Naive thymus-derived CD4-positive, alpha-beta T cell (primary cell): ENCODE measurements at regions of chr21 and their contacts with region 1.

Region 1: GRCh38 chr21:36141513-36141925 is 6.6 kb downstream of the CBR3 start:
- DNase-seq: peak; percentile 50 to 92 (median 84)
- ATAC-seq: peak; percentile 99
- H3K4me3 ChIP-seq: no peak overlapping the region
- H3K4me3 Mint-ChIP-seq: peak overlapping the region in 5 of 10 donors; percentile 1 to 15 (median 3)
- H3K27ac ChIP-seq: peak overlapping the region; percentile 74
- H3K27ac Mint-ChIP-seq: peak overlapping the region; percentile 16 to 92 (median 83)
- H3K4me1 ChIP-seq: peaks cover 18 to 19% of the 10 kb centered on the region in 2 donors
- H3K4me1 Mint-ChIP-seq: peaks cover 11 to 42% (median 39%) of the 10 kb centered on the region in 7 donors
- H3K27me3 ChIP-seq: no peaks in the 10 kb centered on the region
- H3K27me3 Mint-ChIP-seq: no peaks in the 10 kb centered on the region

Region 2: DNA sequence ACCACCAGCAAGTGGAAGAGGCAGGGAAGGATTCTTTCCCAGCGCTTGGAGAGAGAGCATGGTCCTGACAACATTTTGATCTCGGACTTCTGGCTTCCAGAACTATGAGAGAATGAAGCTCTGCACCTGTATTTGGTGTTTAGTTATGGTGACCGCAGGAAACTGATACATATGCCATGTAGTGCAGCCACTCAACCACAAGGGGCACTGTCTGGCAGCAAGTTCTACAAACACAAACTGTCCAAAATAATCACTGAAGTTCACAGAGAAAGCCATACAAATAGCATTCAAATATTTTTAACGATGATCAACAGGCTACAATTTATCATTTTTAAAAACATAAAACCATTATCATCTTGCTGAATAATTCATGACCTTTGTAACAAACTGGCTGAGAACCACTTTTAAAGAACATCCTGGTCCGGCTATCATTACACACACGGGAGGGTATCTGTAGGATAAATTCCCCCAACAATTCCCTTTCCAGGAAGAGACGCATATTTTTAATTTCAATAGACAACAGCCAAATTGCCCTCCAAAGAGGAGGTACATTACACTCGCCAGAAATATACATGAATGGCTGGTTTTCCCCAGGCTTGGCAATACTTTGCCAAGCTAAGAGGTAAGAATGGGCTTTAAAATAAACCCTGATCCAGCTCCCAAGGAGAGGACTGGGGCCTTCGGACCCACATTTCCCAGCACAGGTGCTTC is 15.9 kb before region 1 on chr21:
- CTCF ChIA-PET with region 1: interaction called, 5 read pairs
- POLR2A ChIA-PET with region 1: interaction called, 6 read pairs
- intact Hi-C with region 1: loop called in 1 of 2 experiments (anchors 2 kb)
- DNase-seq: peak in 7 of 9 donors; percentile 26 to 59 (median 49)
- ATAC-seq: peak; percentile 76
- H3K4me3 ChIP-seq: no peak overlapping the region
- H3K4me3 Mint-ChIP-seq: peak overlapping the region in 1 of 10 donors; percentile 78
- H3K27ac ChIP-seq: no peak overlapping the region
- H3K27ac Mint-ChIP-seq: peak overlapping the region in 3 of 9 donors; percentile 41 to 72 (median 43)
- H3K4me1 ChIP-seq: peaks cover 3 to 13% of the 10 kb centered on the region in 2 donors
- H3K4me1 Mint-ChIP-seq: peaks cover 10 to 31% (median 25%) of the 10 kb centered on the region in 7 donors
- H3K27me3 ChIP-seq: no peaks in the 10 kb centered on the region
- H3K27me3 Mint-ChIP-seq: peaks cover 0 to 8% (median 0%) of the 10 kb centered on the region in 5 donors

Region 3: DNA sequence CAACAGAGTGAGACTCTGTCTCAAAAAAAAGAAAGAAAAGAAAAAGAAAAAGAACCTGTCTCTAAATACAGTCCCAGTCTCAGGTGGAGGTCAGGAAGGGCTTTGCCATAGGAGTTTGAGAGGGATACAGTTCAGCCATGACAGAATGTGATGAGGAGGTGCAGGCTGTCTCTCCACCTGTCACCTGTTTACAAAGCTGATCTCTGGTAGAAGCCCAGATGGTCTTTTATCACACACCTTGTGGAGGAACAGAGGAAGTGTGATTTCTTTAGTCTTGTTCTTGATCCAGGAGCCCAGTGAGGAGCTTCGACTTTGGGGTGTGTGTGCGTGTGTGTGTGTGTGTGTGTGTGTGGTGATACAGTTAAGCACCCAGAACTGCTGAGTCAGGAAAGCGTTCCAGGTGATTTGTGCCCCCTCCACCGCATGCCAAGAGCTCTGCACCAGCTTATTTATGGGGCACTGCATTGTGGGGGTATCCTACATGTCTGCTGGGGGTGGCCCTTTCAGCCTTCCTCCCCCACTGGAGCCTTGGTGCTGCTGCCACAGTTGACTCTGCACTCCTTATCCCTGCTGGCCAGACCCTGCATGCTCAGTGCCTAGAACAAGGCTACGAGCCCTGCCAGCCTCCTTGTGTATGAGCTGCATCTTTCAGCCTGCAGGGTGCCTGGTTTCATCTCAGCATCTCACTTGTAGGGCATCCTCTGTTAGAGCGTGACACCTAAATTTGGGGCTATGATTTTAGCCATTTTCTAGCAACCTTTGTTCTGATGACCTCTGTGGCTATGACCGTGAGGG is 34.4 kb after region 1 on chr21:
- CTCF ChIA-PET with region 1: interaction called, 5 read pairs
- POLR2A ChIA-PET with region 1: interaction called, 3 read pairs
- intact Hi-C with region 1: loop called in 1 of 2 experiments (anchors 1 kb)
- DNase-seq: peak in 5 of 9 donors; percentile 3 to 33 (median 14)
- ATAC-seq: peak; percentile 30
- H3K4me3 ChIP-seq: no peak overlapping the region
- H3K4me3 Mint-ChIP-seq: peak overlapping the region in 2 of 10 donors; percentile 12 to 16
- H3K27ac ChIP-seq: no peak overlapping the region
- H3K27ac Mint-ChIP-seq: peak overlapping the region in 8 of 9 donors; percentile 42 to 87 (median 84)
- H3K4me1 ChIP-seq: peaks cover 9 to 14% of the 10 kb centered on the region in 2 donors
- H3K4me1 Mint-ChIP-seq: peaks cover 7 to 33% (median 24%) of the 10 kb centered on the region in 7 donors
- H3K27me3 ChIP-seq: no peaks in the 10 kb centered on the region
- H3K27me3 Mint-ChIP-seq: no peaks in the 10 kb centered on the region

Region 4: GRCh38 chr21:36385233-36386030 is 243.9 kb after region 1 on chr21 and contains the start of gene CHAF1B:
- CTCF ChIA-PET with region 1: no interaction called
- POLR2A ChIA-PET with region 1: no interaction called
- intact Hi-C with region 1: loop called in 1 of 2 experiments (anchors 2 kb)
- DNase-seq: peak; percentile 63 to 94 (median 82)
- ATAC-seq: peak; percentile 99
- H3K4me3 ChIP-seq: peak within 1 kb of the TSS; percentile 77
- H3K4me3 Mint-ChIP-seq: peak within 1 kb of the TSS; percentile 70 to 89 (median 85)
- H3K27ac ChIP-seq: peak within 1 kb of the TSS; percentile 68
- H3K27ac Mint-ChIP-seq: peak within 1 kb of the TSS in 8 of 9 donors; percentile 7 to 83 (median 56)
- H3K4me1 ChIP-seq: peaks cover 0 to 4% of the 10 kb centered on the region in 2 donors
- H3K4me1 Mint-ChIP-seq: peaks cover 4 to 30% (median 6%) of the 10 kb centered on the region in 7 donors
- H3K27me3 ChIP-seq: no peaks in the 10 kb centered on the region
- H3K27me3 Mint-ChIP-seq: no peaks in the 10 kb centered on the region
- total RNA-seq, gene CHAF1B: 1.5 to 21.4 (median 4.0) TPM